ENCODE measurements at regions of chr17 and their contacts with region 1.

Region 1: DNA sequence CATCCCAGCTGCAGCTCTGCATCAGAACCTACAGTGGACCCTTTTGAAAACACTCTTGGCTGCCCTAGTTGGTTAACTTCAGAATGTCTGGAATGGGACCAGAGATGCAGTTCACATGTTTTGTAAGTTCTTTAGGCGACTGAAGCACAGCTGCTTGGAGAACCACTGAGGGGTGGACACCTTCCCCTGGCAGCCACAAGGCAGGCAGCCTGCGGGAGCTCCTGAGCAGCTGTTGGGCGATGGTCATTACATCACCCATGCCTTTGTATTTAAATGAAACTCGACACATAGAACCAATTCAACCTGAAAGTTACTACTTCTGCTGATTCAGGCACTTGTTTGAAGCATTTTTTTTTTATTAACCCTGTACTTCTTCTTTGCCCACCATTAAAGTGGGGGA is 151.5 kb downstream of the LGALS9B start:
- DNase-seq: no peak
- ATAC-seq: no peak
- H3K4me3 ChIP-seq: no peak overlapping the region
- H3K27ac ChIP-seq: no peak overlapping the region
- H3K4me1 ChIP-seq: peaks cover 0 to 6% (median 0%) of the 10 kb centered on the region in 9 donors
- H3K27me3 ChIP-seq: no peaks in the 10 kb centered on the region
- CTCF ChIP-seq: no peak

Region 2: GRCh38 chr17:19992803-19993713 is 322.8 kb before region 1 on chr17:
- intact Hi-C with region 1: loop called in 4 of 10 experiments (anchors 5 to 10 kb)
- DNase-seq: peak; percentile 85 to 87
- ATAC-seq: peak; percentile 96 to 99 (median 98)
- H3K4me3 ChIP-seq: peak overlapping the region in 1 of 10 donors; percentile 11
- H3K27ac ChIP-seq: no peak overlapping the region
- H3K4me1 ChIP-seq: peaks cover 0 to 6% (median 4%) of the 10 kb centered on the region in 9 donors
- H3K27me3 ChIP-seq: peaks cover 0 to 5% (median 0%) of the 10 kb centered on the region in 7 donors
- CTCF ChIP-seq: peak; percentile 48 to 84 (median 79)

Region 3: DNA sequence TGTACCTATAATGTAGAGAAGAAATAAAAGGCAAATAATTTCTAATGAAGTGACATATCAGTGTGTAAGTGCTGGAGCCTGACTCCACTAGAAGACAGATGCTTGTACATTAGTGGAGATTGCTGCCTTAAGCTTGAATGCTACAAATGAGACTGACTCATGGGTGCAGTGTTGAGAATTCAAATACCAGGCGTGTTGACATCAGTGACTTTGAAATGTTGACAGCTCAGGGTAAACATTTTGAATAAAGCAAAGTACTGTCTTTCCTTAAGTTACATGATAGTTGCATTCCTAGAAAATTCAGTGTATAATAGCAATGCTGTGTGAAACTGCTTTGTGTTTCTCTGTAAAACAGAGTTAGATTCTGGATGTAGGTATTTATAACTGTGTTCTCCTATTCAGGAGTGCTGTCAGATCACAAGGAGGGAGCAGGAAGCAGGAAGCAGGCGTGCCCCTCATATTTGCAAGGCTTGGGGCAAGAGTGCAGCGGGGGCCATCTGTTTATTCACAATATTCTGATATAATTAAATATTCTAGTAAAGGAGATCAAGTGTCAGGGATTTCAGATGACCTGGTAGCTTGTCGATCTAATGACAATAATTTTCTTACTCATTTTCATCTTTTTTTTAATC is 187.7 kb before region 1 on chr17:
- intact Hi-C with region 1: loop called in 9 of 10 experiments (anchors 5 kb)
- DNase-seq: no peak
- ATAC-seq: peak in 1 of 8 donors; percentile 76
- H3K4me3 ChIP-seq: no peak overlapping the region
- H3K27ac ChIP-seq: no peak overlapping the region
- H3K4me1 ChIP-seq: peaks cover 0 to 8% (median 0%) of the 10 kb centered on the region in 9 donors
- H3K27me3 ChIP-seq: peaks cover 0 to 4% (median 0%) of the 10 kb centered on the region in 7 donors
- CTCF ChIP-seq: no peak

Region 4: GRCh38 chr17:20234276-20234675 is 81.5 kb before region 1 on chr17:
- intact Hi-C with region 1: loop called in 8 of 10 experiments (anchors 5 to 10 kb)
- DNase-seq: no peak
- ATAC-seq: no peak
- H3K4me3 ChIP-seq: no peak overlapping the region
- H3K27ac ChIP-seq: no peak overlapping the region
- H3K4me1 ChIP-seq: no peaks in the 10 kb centered on the region
- H3K27me3 ChIP-seq: peaks cover 0 to 3% (median 0%) of the 10 kb centered on the region in 7 donors
- CTCF ChIP-seq: no peak

Region 5: GRCh38 chr17:20992987-20993862 is 677.4 kb after region 1 on chr17:
- intact Hi-C with region 1: loop called in 1 of 10 experiments (anchors 5 kb)
- DNase-seq: peak; percentile 53 to 56
- ATAC-seq: peak; percentile 24 to 73 (median 62)
- H3K4me3 ChIP-seq: peak overlapping the region in 4 of 10 donors; percentile 1 to 30 (median 12)
- H3K27ac ChIP-seq: peak overlapping the region in 4 of 10 donors; percentile 26 to 44 (median 40)
- H3K4me1 ChIP-seq: peaks cover 1 to 31% (median 14%) of the 10 kb centered on the region in 9 donors
- H3K27me3 ChIP-seq: no peaks in the 10 kb centered on the region
- CTCF ChIP-seq: peak; percentile 87 to 91 (median 89)

Measured in heart right ventricle (tissue), 16 donors.